Vagina (tissue), 2 donors: ENCODE measurements at regions of chr20 and their contacts with region 1.

Region 1: GRCh38 chr20:19995220-19995863 is 21.8 kb upstream of the NAA20 start:
- DNase-seq: no peak
- H3K4me3 ChIP-seq: no peak overlapping the region
- H3K27ac ChIP-seq: peak overlapping the region; percentile 87
- H3K4me1 ChIP-seq: peaks cover 43% of the 10 kb centered on the region
- H3K27me3 ChIP-seq: no peaks in the 10 kb centered on the region
- CTCF ChIP-seq: peak; percentile 59 to 77 (median 69)
- POLR2A ChIP-seq: no peak

Region 2: DNA sequence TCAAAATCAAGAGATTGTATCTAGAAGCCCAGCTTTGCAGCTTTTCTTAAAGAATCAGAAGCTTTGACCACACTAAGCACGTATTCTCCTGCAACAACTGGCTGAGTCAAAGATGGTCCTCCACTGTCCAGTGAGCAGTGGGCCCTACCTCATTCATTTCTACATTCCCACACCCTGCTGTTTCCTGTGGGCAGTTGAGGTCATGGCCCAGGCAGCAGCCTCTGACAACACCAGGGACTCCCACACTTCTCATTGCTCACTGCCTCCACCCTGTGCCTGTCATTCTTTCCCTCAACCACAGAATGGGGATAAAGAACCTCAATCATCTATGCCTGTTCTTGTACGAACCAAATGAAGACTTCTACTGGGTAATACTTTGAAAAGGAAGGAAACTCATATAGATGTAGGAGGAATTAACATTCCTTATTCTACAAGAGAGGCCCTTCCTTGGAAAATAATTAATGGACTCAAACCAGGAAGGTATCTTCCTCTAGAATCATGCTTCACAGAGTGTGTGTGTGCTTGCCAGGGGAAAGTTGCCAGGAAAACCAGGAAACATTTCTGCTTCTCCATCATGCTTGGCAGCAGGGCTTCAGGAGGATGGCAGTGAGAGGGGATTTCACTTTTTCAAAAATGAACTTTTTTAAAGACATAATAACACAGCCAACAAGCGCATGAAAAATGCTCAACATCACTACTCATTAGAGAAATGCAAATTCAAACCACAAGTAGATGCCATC is 428.9 kb before region 1 on chr20:
- intact Hi-C with region 1: no loop called
- DNase-seq: no peak
- H3K4me3 ChIP-seq: no peak overlapping the region
- H3K27ac ChIP-seq: no peak overlapping the region
- H3K4me1 ChIP-seq: peaks cover 6% of the 10 kb centered on the region
- H3K27me3 ChIP-seq: no peaks in the 10 kb centered on the region
- CTCF ChIP-seq: no peak
- POLR2A ChIP-seq: no peak

Region 3: DNA sequence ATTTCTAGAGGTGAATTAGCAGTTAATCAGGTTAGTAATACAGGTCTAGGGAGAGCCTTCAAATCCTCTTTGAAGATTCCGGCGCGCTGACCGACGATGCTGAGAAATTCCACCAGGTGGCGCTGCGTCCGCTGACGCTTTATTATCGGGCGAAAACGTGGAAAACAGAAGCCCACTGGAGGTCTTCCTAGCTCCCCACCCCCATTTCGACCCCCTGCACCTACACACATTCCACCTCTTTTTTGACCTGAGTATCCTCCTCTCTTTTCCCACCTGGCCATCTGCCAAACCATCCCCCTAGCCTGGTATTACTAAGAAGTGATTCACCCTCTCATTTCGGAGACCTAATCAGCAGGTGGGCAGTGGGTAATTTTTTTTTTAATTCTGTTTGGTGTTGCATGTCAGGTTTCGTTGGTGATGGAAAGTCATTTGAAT is 302.6 kb before region 1 on chr20:
- intact Hi-C with region 1: loop called (anchors 10 kb)
- DNase-seq: no peak
- H3K4me3 ChIP-seq: no peak overlapping the region
- H3K27ac ChIP-seq: no peak overlapping the region
- H3K4me1 ChIP-seq: peaks cover 6% of the 10 kb centered on the region
- H3K27me3 ChIP-seq: no peaks in the 10 kb centered on the region
- CTCF ChIP-seq: peak; percentile 69 to 94 (median 94)
- POLR2A ChIP-seq: no peak

Region 4: DNA sequence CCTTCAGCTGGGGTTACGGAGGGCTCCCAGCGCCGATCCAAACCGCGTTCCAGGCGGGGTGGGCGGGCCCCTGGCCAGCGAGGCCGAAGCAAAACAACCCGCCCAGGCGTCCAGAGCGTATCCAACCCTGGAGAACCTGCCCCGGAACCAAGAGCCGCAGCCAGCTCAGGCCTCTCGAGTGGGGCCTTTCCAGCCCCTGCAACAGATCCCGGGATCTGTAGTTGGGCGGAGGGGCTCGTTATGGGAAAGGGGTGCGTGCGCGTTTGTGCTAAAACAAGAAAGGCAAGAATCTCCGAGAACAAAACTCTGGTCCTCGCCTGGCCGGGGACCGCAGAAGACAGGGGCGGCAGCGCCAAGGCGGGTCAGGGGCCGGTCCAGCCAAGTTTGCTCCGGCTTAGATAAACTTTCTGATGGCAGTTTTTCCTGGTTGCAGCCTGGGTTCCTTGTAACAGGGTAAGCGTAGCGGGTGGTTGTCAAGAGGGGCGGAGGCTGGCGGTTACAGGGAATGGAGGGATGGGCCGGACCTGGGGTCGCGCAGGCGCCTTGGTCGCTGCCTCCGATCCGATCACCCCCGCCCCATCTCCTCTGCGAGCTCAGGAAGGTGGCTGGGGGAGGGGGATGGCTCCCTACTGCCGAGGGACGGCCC is 237.7 kb before region 1 on chr20:
- intact Hi-C with region 1: no loop called
- DNase-seq: peak in 1 of 2 donors; percentile 94
- H3K4me3 ChIP-seq: peak overlapping the region; percentile 53 to 76
- H3K27ac ChIP-seq: peak overlapping the region; percentile 96
- H3K4me1 ChIP-seq: peaks cover 36% of the 10 kb centered on the region
- H3K27me3 ChIP-seq: no peaks in the 10 kb centered on the region
- CTCF ChIP-seq: no peak
- POLR2A ChIP-seq: peak in 1 of 2 donors; percentile 10

Region 5: GRCh38 chr20:19784511-19785172 is 210.7 kb before region 1 on chr20:
- intact Hi-C with region 1: loop called (anchors 5 kb)
- DNase-seq: no peak
- H3K4me3 ChIP-seq: no peak overlapping the region
- H3K27ac ChIP-seq: peak overlapping the region; percentile 72
- H3K4me1 ChIP-seq: peaks cover 38% of the 10 kb centered on the region
- H3K27me3 ChIP-seq: no peaks in the 10 kb centered on the region
- CTCF ChIP-seq: peak in 2 of 3 experiments; percentile 29 to 76
- POLR2A ChIP-seq: no peak

Region 6: GRCh38 chr20:19802492-19803158 is 192.7 kb before region 1 on chr20:
- intact Hi-C with region 1: no loop called
- DNase-seq: no peak
- H3K4me3 ChIP-seq: no peak overlapping the region
- H3K27ac ChIP-seq: no peak overlapping the region
- H3K4me1 ChIP-seq: peaks cover 13% of the 10 kb centered on the region
- H3K27me3 ChIP-seq: no peaks in the 10 kb centered on the region
- CTCF ChIP-seq: peak in 1 of 3 experiments; percentile 13
- POLR2A ChIP-seq: no peak

Region 7: DNA sequence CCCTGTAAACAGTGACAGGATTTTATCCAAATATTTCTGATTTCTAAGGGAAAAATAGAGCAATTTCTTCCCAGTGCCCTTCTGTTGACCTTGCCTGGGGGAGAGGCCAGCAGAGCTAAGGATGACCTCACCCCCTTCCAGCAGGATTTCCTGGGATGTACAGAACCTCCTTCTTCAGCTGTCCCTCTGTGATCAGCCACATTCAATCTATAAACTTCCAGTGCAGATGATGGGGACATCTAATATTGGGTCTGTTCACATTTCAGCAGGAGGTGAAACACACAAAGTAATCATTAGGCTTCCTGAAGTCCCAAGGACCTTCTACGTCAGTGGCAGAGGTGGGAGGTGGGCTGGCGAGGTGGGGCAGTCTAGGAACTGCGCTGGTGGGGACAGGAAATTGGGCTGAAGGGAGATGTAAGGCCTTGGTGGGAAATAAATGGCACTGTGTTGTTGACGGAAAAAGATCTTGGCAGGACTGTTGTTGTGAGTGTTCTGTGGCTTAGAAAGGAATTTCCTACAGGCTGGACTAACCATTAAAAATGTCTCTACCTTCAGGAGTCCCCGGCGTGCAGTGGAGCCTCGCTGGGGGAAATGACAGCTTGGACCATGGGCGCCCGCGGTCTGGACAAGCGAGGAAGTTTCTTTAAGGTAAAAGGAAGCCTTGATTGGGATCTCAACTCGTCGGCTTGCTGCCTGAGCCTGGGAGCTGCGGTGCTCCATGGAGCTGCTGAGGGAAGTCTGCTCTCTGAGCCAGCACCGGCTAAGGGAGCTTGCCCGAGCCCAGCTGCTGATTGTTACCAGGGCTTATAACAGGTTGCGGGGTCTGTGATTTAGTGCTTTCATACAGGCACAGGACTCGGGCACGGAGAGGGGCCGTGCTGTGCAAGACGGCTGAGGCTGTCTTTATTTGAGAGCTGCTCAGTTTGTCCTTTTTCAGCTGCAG is 106.1 kb before region 1 on chr20:
- intact Hi-C with region 1: loop called (anchors 10 kb)
- DNase-seq: no peak
- H3K4me3 ChIP-seq: peak overlapping the region; percentile 18 to 45
- H3K27ac ChIP-seq: peak overlapping the region; percentile 85
- H3K4me1 ChIP-seq: peaks cover 70% of the 10 kb centered on the region
- H3K27me3 ChIP-seq: no peaks in the 10 kb centered on the region
- CTCF ChIP-seq: no peak
- POLR2A ChIP-seq: no peak

Region 8: GRCh38 chr20:20860078-20860806 is 864.9 kb after region 1 on chr20:
- intact Hi-C with region 1: no loop called
- DNase-seq: no peak
- H3K4me3 ChIP-seq: no peak overlapping the region
- H3K27ac ChIP-seq: no peak overlapping the region
- H3K4me1 ChIP-seq: no peaks in the 10 kb centered on the region
- H3K27me3 ChIP-seq: no peaks in the 10 kb centered on the region
- CTCF ChIP-seq: peak; percentile 89 to 92 (median 90)
- POLR2A ChIP-seq: no peak